ENCODE measurements at regions of chr12 and their contacts with region 1.

Region 1: DNA sequence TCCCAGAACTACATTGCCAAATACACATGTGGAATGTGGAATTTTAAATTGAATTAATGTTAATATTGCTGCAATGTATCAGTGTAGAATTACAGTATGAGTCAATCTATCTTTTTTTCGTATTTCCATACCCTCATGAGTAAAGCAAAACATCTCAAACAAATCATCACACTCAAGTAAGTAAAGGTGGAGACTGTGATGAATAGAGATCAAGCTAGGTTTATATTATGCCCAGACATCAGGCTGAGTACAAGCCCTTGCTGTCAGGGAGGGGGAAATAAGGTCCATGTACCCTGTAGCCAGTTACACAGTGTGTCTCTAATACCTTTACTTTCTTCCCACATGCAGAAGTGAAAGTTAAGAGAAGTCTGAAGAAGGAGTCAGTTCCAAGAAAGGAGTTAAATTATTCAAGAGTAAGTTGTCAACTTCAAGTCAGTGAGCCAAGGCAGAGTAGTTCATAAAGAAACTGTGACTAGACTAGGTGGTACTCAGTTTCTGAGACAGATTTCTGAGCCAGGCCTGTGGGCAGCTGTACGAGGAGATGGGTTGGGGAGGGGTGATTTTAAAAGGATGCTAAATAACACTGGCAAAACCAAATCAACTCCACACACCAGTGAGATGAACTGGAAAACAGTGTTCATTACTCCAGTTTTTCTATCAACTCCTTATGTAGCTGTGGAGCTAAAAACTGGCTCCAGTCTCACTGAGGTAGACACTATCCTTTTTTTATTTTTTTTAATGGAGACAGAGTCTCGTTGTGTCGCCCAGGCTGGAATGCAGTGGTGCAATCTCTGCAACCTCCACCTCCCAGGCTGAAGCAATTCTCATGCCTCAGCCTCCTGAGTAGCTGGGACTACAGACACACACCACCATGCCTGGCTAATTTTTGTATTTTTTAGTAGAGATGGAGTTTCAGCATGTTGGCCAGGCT is 23.8 kb upstream of the STK38L start:
- DNase-seq: peak; percentile 44
- ATAC-seq: peak; percentile 66
- H3K4me3 ChIP-seq: peak overlapping the region in 1 of 5 experiments; percentile 18
- H3K4me3 Mint-ChIP-seq: peak overlapping the region; percentile 77
- H3K27ac ChIP-seq: peak overlapping the region; percentile 28 to 48
- H3K27ac Mint-ChIP-seq: peak overlapping the region; percentile 78
- H3K4me1 ChIP-seq: peaks cover 32 to 37% of the 10 kb centered on the region in 2 donors
- H3K4me1 Mint-ChIP-seq: peaks cover 31% of the 10 kb centered on the region
- H3K27me3 ChIP-seq: no peaks in the 10 kb centered on the region
- H3K27me3 Mint-ChIP-seq: no peaks in the 10 kb centered on the region
- CTCF ChIP-seq: no peak

Region 2: GRCh38 chr12:26264215-26264838 is 956.0 kb before region 1 on chr12:
- CTCF ChIA-PET with region 1: no interaction called
- POLR2A ChIA-PET with region 1: no interaction called
- intact Hi-C with region 1: no loop called
- DNase-seq: no peak
- ATAC-seq: no peak
- H3K4me3 ChIP-seq: no peak overlapping the region
- H3K4me3 Mint-ChIP-seq: no peak overlapping the region
- H3K27ac ChIP-seq: no peak overlapping the region
- H3K27ac Mint-ChIP-seq: no peak overlapping the region
- H3K4me1 ChIP-seq: peaks cover 0 to 11% of the 10 kb centered on the region in 2 donors
- H3K4me1 Mint-ChIP-seq: peaks cover 15% of the 10 kb centered on the region
- H3K27me3 ChIP-seq: no peaks in the 10 kb centered on the region
- H3K27me3 Mint-ChIP-seq: no peaks in the 10 kb centered on the region
- CTCF ChIP-seq: no peak

Region 3: GRCh38 chr12:27237790-27238771 is 17.8 kb after region 1 on chr12:
- CTCF ChIA-PET with region 1: interaction called, 3 read pairs
- POLR2A ChIA-PET with region 1: no interaction called
- intact Hi-C with region 1: loop called (anchors 2 kb)
- DNase-seq: peak; percentile 62
- ATAC-seq: peak; percentile 77
- H3K4me3 ChIP-seq: no peak overlapping the region
- H3K4me3 Mint-ChIP-seq: peak overlapping the region; percentile 44
- H3K27ac ChIP-seq: peak overlapping the region; percentile 38 to 71
- H3K27ac Mint-ChIP-seq: peak overlapping the region; percentile 74
- H3K4me1 ChIP-seq: peaks cover 16% of the 10 kb centered on the region in 2 donors
- H3K4me1 Mint-ChIP-seq: peaks cover 24% of the 10 kb centered on the region
- H3K27me3 ChIP-seq: no peaks in the 10 kb centered on the region
- H3K27me3 Mint-ChIP-seq: no peaks in the 10 kb centered on the region
- CTCF ChIP-seq: no peak

Measured in B cell (primary cell).